ENCODE measurements at regions of chr14 and their contacts with region 1.

Region 1: DNA sequence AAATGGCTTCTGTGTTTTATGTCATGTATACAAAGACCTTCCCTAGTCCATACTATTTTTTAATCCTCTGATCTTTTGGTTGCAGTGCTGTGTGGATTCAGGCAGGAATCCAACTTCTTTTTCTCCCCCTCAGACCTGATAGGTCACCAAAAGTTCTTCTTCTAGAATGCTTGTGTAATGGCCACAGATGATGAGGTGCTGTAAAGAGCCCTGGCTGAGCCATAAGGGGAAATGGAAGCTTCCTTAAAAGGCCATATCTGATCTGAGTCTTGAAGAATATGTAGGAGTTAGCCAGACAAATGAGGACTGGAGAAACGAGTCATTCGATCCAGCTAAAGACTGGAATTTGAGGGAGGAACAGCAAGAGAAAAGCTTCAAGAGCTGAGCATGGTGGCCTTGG is 353.9 kb downstream of the PCNX1 start:
- H3K4me3 ChIP-seq: no peak overlapping the region
- H3K27ac ChIP-seq: no peak overlapping the region
- H3K4me1 ChIP-seq: no peaks in the 10 kb centered on the region
- CTCF ChIP-seq: no peak

Region 2: DNA sequence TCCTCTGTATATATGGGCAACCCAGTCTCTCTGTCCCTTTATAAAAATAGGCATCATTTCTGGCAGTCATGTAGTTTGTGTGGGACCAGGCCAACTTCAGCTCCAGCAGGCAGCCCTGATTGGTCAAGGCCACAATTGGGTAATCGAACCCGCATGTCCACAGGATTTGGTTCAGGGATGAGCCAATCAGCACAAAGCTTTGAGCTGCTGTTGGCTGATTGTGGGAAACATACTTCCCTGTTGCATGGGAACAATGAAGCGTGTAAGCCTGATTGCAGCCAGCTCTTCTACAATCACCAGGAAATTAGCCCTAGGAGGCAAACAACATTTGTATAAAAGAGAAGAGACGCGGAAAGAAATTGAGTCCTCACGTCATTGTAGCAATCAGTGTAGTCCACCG is 25.3 kb before region 1 on chr14:
- CTCF ChIA-PET with region 1: interaction called, 10 read pairs
- POLR2A ChIA-PET with region 1: no interaction called
- H3K4me3 ChIP-seq: no peak overlapping the region
- H3K27ac ChIP-seq: no peak overlapping the region
- H3K4me1 ChIP-seq: no peaks in the 10 kb centered on the region
- CTCF ChIP-seq: no peak